Dorsolateral prefrontal cortex (tissue), 120 donors: ENCODE measurements at regions of chr13 and their contacts with region 1.

Region 1: DNA sequence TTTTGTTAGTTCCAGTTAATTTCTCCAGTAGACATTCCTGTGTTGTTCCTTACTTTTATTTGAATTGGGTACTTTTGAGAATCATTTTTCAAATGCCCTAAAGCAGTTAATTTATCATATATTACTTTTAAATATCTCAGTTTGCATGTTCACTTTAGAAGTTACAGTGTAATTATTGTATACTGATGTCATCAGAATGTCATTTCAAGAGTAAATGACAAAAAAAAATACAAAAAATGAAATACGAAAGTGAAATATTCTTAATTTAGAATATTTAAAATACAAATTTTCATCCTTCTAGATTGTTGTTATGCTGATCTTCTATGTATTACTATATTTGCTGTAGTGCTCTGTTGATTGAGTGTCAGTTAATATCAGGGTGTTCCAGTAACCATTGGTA is 114.2 kb downstream of the PAN3 start:
- DNase-seq: no peak
- H3K4me3 ChIP-seq: no peak overlapping the region
- H3K27ac ChIP-seq: no peak overlapping the region
- H3K27me3 ChIP-seq: no peaks in the 10 kb centered on the region
- CTCF ChIP-seq: no peak

Region 2: DNA sequence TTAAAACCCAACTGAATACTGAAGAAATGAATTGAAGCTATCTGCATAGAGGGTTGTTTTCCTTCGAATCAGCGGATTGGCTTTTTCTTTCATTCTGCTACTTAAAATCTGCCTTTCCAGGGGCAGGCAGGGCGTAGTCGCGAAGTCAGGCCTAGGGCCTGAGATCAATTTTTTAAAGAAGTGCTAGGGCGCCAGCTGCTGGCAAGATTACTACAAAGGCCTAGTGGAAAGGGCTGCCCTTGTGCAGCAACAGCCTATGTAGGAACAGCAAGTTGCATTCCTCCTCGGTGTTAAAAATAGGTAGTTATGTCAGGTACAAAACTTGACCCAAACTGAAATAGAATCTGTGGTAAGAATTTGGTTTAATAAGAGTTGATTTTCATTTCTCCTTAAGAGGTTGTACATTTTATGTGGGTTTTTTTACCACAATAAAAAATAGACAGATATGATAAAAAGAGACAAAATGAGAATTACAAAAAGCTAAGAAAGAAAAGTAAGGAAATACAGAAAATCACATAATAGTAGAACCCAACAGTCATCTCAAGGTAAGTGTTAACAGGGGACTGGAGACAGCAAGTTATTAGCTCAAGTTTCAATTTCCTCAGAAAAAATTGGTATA is 254.5 kb before region 1 on chr13:
- intact Hi-C with region 1: no loop called
- DNase-seq: no peak
- H3K4me3 ChIP-seq: no peak overlapping the region
- H3K27ac ChIP-seq: no peak overlapping the region
- H3K27me3 ChIP-seq: no peaks in the 10 kb centered on the region
- CTCF ChIP-seq: peak in 13 of 56 donors; percentile 7 to 33 (median 20)

Region 3: DNA sequence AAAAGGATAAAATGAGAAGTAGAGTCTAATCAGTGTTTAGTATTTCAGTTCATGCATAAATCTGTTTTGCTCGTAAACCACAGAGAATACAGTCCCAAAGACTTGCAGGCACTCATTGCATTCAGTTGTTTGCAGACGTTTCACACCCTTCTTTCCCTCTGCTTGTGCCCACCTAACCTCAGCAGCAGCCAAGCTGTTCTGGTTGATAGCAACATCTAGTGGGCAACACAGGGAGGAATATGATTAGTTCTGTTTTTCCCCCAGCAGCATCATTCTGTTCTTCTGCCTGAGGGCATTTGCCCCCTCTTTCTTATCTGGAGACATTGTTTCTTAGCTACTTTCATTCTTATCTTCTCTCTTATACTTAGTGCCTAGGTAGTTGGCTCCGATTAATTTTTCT is 21.4 kb after region 1 on chr13:
- intact Hi-C with region 1: loop called in 1 of 2 experiments (anchors 2 kb)
- DNase-seq: no peak
- H3K4me3 ChIP-seq: no peak overlapping the region
- H3K27ac ChIP-seq: no peak overlapping the region
- H3K27me3 ChIP-seq: no peaks in the 10 kb centered on the region
- CTCF ChIP-seq: no peak

Region 4: DNA sequence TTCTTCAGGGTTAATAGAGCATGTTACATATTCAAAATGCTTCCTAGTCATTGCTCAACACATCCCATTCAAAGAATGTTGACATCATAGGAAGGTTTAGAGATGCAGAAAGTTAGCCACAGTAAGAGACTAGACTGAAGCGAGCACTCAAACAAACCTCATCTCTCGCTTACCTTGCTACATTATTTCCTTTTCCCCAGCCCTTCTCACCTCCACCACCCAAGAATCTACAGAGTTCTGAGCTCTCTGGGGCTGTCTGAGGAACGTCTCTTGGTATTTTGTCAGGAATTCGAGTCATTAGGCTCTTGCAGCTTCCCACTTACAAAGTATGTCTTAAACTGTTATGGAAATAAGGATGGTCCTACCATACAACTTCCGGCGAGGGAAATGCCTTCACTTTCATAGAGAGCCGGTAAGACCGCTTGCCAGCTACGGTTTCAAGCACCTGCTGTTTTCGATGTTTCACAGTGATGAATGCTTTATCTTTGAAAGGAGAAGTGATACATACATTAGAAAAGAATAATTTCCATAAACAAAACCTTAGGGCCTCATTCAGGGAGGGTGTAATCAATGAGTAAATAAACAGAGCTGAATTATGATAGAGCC is 177.2 kb after region 1 on chr13:
- intact Hi-C with region 1: no loop called
- DNase-seq: no peak
- H3K4me3 ChIP-seq: no peak overlapping the region
- H3K27ac ChIP-seq: no peak overlapping the region
- H3K27me3 ChIP-seq: peaks cover 0 to 16% (median 0%) of the 10 kb centered on the region in 45 donors
- CTCF ChIP-seq: no peak

Region 5: GRCh38 chr13:28467034-28467433 is 214.5 kb after region 1 on chr13:
- intact Hi-C with region 1: no loop called
- DNase-seq: no peak
- H3K4me3 ChIP-seq: no peak overlapping the region
- H3K27ac ChIP-seq: no peak overlapping the region
- H3K27me3 ChIP-seq: peaks cover 0 to 17% (median 0%) of the 10 kb centered on the region in 45 donors
- CTCF ChIP-seq: no peak